ENCODE measurements at regions of chr6 and their contacts with region 1.

Region 1: DNA sequence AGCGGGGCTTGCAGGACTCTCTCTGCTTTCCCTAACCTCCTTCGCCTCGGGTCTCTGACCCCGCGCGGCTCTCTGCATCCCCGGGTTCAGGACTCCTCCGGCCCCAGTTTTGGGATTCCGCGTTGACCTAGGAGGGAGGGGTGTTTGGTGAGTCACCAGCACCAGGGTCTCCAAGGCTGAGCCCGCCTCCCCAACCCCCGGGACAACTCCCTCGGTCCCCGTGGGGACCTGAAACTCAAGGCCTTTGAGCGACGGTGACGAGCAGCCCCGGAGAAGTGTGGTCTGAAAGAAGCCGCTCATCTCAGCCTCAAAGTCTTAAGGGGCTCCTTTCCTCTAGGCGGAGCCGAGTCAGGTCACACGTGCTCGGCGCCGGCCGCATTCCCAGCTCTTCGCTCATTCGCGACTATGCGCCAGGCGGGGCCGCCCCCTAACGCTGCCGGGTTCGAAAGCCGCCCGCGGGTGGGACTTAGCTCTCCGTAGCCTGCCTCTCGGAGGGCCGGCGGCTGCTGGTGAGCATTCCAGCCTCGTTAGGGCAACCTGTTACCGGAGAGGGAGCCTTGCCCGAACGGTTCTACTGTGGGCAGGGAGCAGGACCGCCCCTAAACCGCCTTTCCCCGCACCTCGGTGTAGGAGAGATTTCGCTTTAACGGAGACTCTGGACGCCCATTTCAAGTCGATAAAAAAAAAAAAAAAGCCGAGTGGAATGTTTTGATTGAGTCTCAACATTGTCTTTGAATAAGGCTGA is 3.0 kb upstream of the PRDM13 start:
- DNase-seq: peak in 1 of 2 experiments; percentile 89
- H3K4me3 ChIP-seq: peak overlapping the region in 3 of 4 experiments; percentile 22 to 53 (median 26); a peak in 6 of 8 replicates
- H3K27ac ChIP-seq: no peak overlapping the region
- H3K4me1 ChIP-seq: peaks cover 0 to 26% (median 9%) of the 10 kb centered on the region in 4 experiments; a peak in 5 of 7 replicates
- H3K27me3 ChIP-seq: peaks cover 89 to 98% (median 91%) of the 10 kb centered on the region in 4 experiments
- CTCF ChIP-seq: no peak
- EP300 ChIP-seq: no peak
- POLR2A ChIP-seq: no peak
- RAD21 ChIP-seq: no peak

Region 2: DNA sequence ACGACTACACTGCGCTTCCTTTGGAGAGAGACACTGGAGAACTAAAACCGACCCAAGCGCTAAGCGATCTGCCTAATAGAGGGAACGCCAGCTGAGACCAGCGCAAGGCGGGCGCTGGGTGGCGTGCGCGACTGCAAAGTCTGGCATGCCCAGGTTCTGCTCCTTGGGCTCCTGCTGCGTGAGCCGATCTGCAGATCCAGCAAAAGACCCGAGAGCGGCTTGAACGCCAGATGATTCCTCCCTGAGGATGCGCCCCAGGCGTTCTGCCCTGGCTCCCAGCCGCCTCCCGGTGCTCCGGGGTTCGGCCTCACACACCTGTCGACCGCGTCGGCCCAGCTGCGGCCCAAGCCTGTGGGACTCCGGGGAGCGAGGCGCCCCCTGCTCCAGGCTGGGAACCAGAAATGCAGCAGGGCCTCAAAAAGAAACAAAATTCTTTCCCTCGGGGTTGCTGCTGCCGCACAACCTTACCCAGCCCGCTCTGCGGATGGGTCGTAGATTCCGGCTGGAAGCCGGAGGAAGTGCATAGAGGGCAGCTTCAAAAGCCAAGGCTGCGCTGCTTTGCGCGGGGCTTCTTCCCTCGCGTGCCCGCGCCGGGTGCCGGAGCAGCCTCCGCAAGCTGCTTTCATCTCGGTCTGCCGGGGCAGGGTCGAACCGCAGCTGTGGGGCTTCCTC is 14.8 kb before region 1 on chr6:
- CTCF ChIA-PET with region 1: interaction called, 49 read pairs
- POLR2A ChIA-PET with region 1: interaction called, 12 read pairs
- DNase-seq: peak; percentile 81 to 84
- H3K4me3 ChIP-seq: peak overlapping the region; percentile 25 to 61 (median 38)
- H3K27ac ChIP-seq: no peak overlapping the region
- H3K4me1 ChIP-seq: peaks cover 0 to 6% (median 2%) of the 10 kb centered on the region in 4 experiments; a peak in 4 of 7 replicates
- H3K27me3 ChIP-seq: peaks cover 56 to 90% (median 76%) of the 10 kb centered on the region in 4 experiments
- CTCF ChIP-seq: peak; percentile 70 to 78 (median 76)
- EP300 ChIP-seq: no peak
- POLR2A ChIP-seq: no peak
- RAD21 ChIP-seq: peak; percentile 81 to 85

Region 3: GRCh38 chr6:99618649-99619408 is 15.2 kb after region 1 on chr6:
- CTCF ChIA-PET with region 1: interaction called, 12 read pairs
- POLR2A ChIA-PET with region 1: interaction called, 4 read pairs
- DNase-seq: peak in 1 of 2 experiments; percentile 87
- H3K4me3 ChIP-seq: peak overlapping the region; percentile 36 to 58 (median 42)
- H3K27ac ChIP-seq: no peak overlapping the region
- H3K4me1 ChIP-seq: peaks cover 0 to 9% (median 7%) of the 10 kb centered on the region in 4 experiments; a peak in 5 of 7 replicates
- H3K27me3 ChIP-seq: peaks cover 54 to 78% (median 63%) of the 10 kb centered on the region in 4 experiments
- CTCF ChIP-seq: no peak
- EP300 ChIP-seq: no peak
- POLR2A ChIP-seq: no peak
- RAD21 ChIP-seq: no peak

Measured in H1 (cell line).